ENCODE measurements at regions of chr7 and their contacts with region 1.

Region 1: DNA sequence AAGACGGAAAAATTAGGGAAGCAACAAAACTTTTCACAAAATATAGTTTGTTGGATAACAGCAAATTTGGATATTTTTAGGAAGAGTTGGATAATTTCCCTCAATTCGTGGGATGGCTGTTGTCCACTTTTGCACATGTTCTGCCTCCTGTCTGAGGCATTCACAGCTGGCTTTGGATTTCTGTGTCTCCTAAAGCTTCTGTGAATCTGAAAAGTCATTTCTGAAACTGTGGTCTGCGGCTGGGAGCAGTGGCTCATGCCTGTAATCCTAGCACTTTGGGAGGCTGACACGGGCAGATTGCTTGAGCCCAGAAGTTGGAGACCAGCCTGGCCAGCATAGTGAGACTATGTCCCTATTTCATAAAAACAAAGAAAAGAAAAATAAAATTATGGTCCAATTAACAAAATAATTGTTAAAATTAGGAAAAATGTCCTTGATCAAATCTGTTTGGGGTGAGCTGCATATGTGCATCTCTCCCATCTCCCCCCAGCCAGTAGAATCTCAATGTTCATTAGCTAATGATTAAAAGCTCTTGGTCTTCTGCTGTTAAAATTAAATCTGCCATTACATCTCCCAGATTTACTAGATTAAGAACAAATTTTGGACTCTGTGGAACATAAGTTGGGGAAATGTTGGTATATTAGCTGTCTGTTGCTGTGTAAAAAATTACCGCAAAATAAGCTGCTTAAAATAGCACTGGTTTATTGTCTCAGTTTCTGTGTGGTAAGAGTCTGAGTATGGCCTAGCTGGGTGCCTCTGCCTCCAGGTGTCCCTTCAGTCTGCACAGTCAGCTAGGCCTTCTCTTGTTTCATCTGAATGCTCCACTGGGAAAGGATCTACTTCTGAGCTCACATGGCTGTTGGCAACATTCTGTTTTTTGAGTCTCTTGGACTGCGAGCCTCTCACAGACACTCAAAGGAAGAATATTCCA is 332.0 kb upstream of the FZD1 start:
- DNase-seq: no peak
- H3K4me3 ChIP-seq: no peak overlapping the region
- H3K27ac ChIP-seq: no peak overlapping the region
- H3K4me1 ChIP-seq: no peaks in the 10 kb centered on the region
- H3K27me3 ChIP-seq: no peaks in the 10 kb centered on the region
- CTCF ChIP-seq: no peak
- EP300 ChIP-seq: no peak
- POLR2A ChIP-seq: no peak

Region 2: GRCh38 chr7:90877201-90877600 is 55.0 kb before region 1 on chr7:
- intact Hi-C with region 1: loop called (anchors 10 kb)
- DNase-seq: no peak
- H3K4me3 ChIP-seq: no peak overlapping the region
- H3K27ac ChIP-seq: no peak overlapping the region
- H3K4me1 ChIP-seq: no peaks in the 10 kb centered on the region
- H3K27me3 ChIP-seq: no peaks in the 10 kb centered on the region
- CTCF ChIP-seq: no peak
- EP300 ChIP-seq: no peak
- POLR2A ChIP-seq: no peak

Region 3: GRCh38 chr7:91345449-91345848 is 413.2 kb after region 1 on chr7:
- intact Hi-C with region 1: no loop called
- DNase-seq: no peak
- H3K4me3 ChIP-seq: no peak overlapping the region
- H3K27ac ChIP-seq: no peak overlapping the region
- H3K4me1 ChIP-seq: peaks cover 11 to 22% (median 14%) of the 10 kb centered on the region in 4 donors
- H3K27me3 ChIP-seq: no peaks in the 10 kb centered on the region
- CTCF ChIP-seq: no peak
- EP300 ChIP-seq: no peak
- POLR2A ChIP-seq: no peak